ENCODE measurements at regions of chr10 and their contacts with region 1.

Region 1: DNA sequence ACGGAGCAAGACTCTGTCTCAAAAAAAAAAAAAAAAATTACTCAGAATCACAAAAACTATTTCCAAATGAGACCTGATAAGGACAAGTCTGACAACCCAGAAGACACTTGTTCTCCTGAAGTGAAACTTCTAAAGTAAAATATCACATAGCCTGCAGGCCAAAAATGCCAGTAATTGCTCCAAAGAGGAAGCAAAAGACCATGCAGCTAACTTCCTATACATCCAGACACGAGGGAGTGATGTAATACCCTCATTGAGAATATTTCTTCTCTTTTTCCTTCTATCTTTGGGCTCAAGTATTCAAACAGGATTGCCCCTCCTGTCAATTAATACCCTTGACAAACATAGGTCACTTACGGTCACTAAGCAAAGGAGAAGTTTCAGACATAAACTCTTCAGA is 31.2 kb downstream of the ARMH3 start:
- DNase-seq: no peak
- H3K4me3 ChIP-seq: no peak overlapping the region
- H3K27ac ChIP-seq: no peak overlapping the region
- H3K4me1 ChIP-seq: no peaks in the 10 kb centered on the region
- H3K27me3 ChIP-seq: no peaks in the 10 kb centered on the region
- CTCF ChIP-seq: no peak

Region 2: DNA sequence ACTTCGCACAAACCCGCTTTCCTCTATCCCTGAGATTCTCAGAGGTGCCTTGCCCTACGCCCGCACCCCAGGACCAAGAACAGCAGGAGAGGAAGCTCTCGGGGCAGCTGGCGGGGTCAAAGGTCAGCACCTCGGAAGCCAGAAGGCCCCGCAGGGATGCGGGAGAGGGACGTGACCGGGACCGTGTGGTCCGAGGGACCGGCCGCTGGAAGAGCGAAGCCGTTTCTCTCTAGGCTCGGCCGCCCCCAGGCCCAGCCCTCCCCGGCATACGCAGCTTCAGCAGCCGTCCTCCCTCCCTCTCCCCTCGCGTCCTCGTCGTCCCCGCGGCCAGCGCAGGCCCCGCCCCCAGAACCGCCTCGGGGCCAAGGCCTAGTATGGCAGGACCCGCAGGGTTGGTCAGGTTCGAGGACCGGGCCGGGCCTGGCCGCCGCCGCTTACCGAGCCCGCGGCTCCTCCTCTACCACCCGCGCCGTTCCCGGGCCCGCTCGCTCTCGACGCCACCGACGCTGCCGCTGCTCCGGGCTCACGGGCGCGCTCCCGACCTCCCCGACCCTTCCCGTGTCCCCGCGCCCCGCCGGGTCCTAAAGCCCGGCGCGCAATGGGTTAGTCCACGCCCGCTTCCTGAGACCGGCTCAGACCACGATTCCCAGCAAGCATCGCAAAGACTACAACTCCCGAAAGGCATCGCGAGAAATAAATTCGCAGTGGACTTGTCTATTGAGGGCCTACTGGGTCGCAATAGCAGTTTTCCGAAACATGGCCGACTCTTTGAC is 31.0 kb after region 1 on chr10 and contains the start of gene ARMH3:
- CTCF ChIA-PET with region 1: interaction called, 16 read pairs
- POLR2A ChIA-PET with region 1: no interaction called
- intact Hi-C with region 1: no loop called
- DNase-seq: peak; percentile 86 to 87
- H3K4me3 ChIP-seq: peak within 1 kb of the TSS; percentile 84
- H3K27ac ChIP-seq: 0 out of 2 replicates have a peak within 1 kb of the TSS, but pooled peaks have one; percentile 19
- H3K4me1 ChIP-seq: 0 out of 2 replicates have a peak, but pooled peaks cover 7% of the 10 kb centered on the region
- H3K27me3 ChIP-seq: no peaks in the 10 kb centered on the region
- CTCF ChIP-seq: no peak
- total RNA-seq, gene ARMH3: 12.0 and 12.8 TPM in 2 replicates

Measured in PC-9 (cell line).